ENCODE measurements at regions of chr2 and their contacts with region 1.

Region 1: GRCh38 chr2:201780674-201781581 is at the start of gene ALS2:
- DNase-seq: peak; percentile 100
- H3K4me3 ChIP-seq: peak within 1 kb of the TSS; percentile 37 to 75 (median 70)
- H3K27ac ChIP-seq: peak within 1 kb of the TSS; percentile 78 to 83 (median 81)
- H3K4me1 ChIP-seq: peaks cover 6 to 17% of the 10 kb centered on the region in 2 donors
- H3K27me3 ChIP-seq: no peaks in the 10 kb centered on the region
- CTCF ChIP-seq: no peak
- POLR2A ChIP-seq: peak in 1 of 2 donors; percentile 86
- total RNA-seq, gene ALS2: 20.9 to 37.6 (median 29.9) TPM

Region 2: DNA sequence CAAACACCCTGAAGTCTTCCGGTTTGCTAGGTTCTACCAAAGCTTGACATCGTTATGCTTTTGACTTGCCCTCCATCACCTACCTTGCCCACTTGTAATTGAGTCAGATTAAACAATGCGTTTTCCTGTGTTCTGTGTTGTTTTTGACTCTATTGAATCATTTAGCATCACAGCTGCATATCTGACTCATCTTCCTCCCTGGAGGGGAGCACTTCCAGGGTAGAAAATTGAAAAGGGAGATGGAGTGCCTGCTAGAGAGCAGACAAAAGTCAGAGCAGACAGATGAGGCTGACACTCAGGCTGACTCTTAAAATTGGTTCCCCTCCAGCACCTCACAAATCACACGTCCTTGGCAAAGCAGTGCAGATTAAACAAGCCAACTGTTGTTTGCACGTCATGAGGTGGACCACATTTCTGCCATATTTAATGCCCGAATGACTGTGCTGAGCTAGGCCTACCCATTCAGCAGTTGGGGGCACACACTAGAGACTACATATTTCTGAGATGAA is 84.7 kb before region 1 on chr2:
- intact Hi-C with region 1: no loop called
- DNase-seq: no peak
- H3K4me3 ChIP-seq: no peak overlapping the region
- H3K27ac ChIP-seq: no peak overlapping the region
- H3K4me1 ChIP-seq: no peaks in the 10 kb centered on the region
- H3K27me3 ChIP-seq: no peaks in the 10 kb centered on the region
- CTCF ChIP-seq: no peak
- POLR2A ChIP-seq: no peak

Region 3: DNA sequence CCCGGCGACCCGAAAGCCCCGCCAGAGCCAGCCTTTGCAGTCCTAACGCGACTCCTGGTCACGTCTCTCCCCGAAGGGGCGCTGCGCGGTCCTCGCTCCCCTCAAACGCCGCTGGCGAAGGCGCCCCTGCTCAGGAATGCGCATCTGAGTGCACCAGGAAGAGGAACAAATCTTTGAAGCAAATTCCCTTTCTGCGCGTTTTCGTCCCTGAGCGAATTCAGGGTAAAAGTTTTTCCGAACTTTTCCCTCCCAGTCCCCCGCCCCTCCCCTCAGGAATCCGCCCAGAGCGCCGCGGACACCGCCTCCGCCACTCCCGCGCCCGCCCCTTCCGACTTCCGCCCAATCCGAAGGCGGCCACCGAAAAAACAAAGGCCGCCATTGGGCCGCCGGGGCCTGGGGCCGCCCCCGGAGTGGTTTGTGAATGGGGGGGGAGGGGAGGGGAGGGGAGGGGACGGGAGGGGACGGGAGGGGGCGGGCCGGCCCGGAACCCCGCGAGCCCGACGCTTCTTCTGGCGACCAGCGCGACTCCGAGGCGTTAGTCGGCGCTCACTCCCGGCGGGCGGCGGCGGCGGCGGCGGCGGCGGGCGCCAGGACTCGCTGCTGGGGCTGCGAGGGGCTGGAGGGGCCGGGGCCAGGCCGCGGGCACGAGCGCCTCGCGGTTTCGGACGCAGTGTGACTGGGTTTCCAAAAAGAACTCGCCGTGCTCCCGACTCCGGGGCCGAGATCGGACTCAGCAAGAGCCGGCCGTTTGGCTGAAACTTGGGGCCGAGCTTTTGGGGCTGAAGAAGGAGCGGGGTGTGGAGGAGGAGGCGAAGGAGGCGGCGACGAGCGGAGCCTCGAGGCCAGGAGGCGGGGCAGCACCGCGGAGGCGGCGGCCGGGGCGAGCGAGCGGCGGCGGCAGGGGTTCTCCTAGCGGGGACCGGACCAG is 252.7 kb after region 1 on chr2 and contains the start of gene FZD7:
- intact Hi-C with region 1: loop called (anchors 5 kb)
- DNase-seq: peak; percentile 94
- H3K4me3 ChIP-seq: peak within 1 kb of the TSS; percentile 65 to 93 (median 87)
- H3K27ac ChIP-seq: peak within 1 kb of the TSS; percentile 91 to 99 (median 98)
- H3K4me1 ChIP-seq: peaks cover 16 to 32% of the 10 kb centered on the region in 2 donors
- H3K27me3 ChIP-seq: no peaks in the 10 kb centered on the region
- CTCF ChIP-seq: peak in 1 of 6 experiments; percentile 14
- POLR2A ChIP-seq: peak; percentile 31 to 87
- total RNA-seq, gene FZD7: 10.1 to 23.6 (median 10.9) TPM